ENCODE measurements at regions of chr6 and their contacts with region 1.

Region 1: GRCh38 chr6:3277851-3278416 is 19.2 kb downstream of the PSMG4 start:
- DNase-seq: no peak
- ATAC-seq: no peak
- H3K4me3 ChIP-seq: no peak overlapping the region
- H3K4me1 ChIP-seq: no peaks in the 10 kb centered on the region
- CTCF ChIP-seq: no peak

Region 2: GRCh38 chr6:3157131-3157927 is 120.6 kb before region 1 on chr6 and contains the start of gene TUBB2A:
- intact Hi-C with region 1: no loop called
- DNase-seq: peak; percentile 87 to 92 (median 90)
- ATAC-seq: peak; percentile 87
- H3K4me3 ChIP-seq: peak within 1 kb of the TSS; percentile 72
- H3K4me1 ChIP-seq: peaks cover 6% of the 10 kb centered on the region
- CTCF ChIP-seq: peak; percentile 60
- total RNA-seq, gene TUBB2A: 16.4 to 92.8 (median 38.4) TPM

Region 3: GRCh38 chr6:3732345-3733141 is 454.6 kb after region 1 on chr6:
- intact Hi-C with region 1: loop called (anchors 5 kb)
- DNase-seq: peak; percentile 60 to 85 (median 81)
- ATAC-seq: peak; percentile 94
- H3K4me3 ChIP-seq: no peak overlapping the region
- H3K4me1 ChIP-seq: no peaks in the 10 kb centered on the region
- CTCF ChIP-seq: no peak

Region 4: GRCh38 chr6:3997177-3997770 is 719.3 kb after region 1 on chr6:
- intact Hi-C with region 1: no loop called
- DNase-seq: no peak
- ATAC-seq: no peak
- H3K4me3 ChIP-seq: no peak overlapping the region
- H3K4me1 ChIP-seq: no peaks in the 10 kb centered on the region
- CTCF ChIP-seq: no peak